ENCODE measurements at regions of chr7 and their contacts with region 1.

Region 1: GRCh38 chr7:107150375-107151073 is 18.3 kb upstream of the HBP1 start:
- DNase-seq: peak; percentile 34
- ATAC-seq: peak; percentile 57
- H3K4me3 Mint-ChIP-seq: no peak overlapping the region
- H3K27ac Mint-ChIP-seq: no peak overlapping the region
- H3K4me1 Mint-ChIP-seq: peaks cover 7% of the 10 kb centered on the region
- H3K27me3 Mint-ChIP-seq: no peaks in the 10 kb centered on the region
- CTCF ChIP-seq: no peak

Region 2: DNA sequence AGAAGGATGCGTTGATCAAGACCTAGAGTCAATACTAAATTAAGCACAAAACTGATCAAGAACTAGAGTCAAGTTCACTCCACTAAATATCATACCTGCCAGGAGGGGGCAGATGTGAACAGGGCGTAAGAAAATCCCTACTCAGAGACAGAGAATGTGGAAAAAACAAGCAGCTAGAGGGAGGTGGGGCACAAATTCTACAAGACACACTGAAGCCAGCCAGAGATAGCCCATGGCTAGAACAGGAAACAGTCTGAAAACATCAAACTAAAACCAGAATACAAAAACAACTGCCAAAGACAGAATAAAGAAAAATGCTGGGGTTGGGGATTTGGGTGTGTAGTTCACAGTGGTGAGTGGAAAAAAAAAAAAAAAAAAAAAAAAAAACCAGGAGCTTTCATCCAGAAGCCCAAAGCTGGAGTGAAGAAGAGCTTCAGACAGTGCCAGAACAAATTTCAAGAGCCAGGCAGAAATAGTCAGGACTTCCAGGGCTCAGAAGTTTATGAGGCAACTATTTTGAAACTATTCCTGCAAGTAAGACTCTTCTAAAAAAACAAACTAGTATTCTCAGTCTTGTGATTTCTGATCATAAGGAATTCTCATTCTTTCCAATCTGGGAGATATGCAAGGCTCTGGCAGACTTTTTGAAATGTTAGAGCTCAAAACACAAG is 607.8 kb before region 1 on chr7:
- CTCF ChIA-PET with region 1: interaction called, 7 read pairs
- POLR2A ChIA-PET with region 1: no interaction called
- intact Hi-C with region 1: loop called (anchors 2 kb)
- DNase-seq: no peak
- ATAC-seq: peak; percentile 90
- H3K4me3 Mint-ChIP-seq: no peak overlapping the region
- H3K27ac Mint-ChIP-seq: no peak overlapping the region
- H3K4me1 Mint-ChIP-seq: peaks cover 4% of the 10 kb centered on the region
- H3K27me3 Mint-ChIP-seq: peaks cover 2% of the 10 kb centered on the region
- CTCF ChIP-seq: no peak

Region 3: DNA sequence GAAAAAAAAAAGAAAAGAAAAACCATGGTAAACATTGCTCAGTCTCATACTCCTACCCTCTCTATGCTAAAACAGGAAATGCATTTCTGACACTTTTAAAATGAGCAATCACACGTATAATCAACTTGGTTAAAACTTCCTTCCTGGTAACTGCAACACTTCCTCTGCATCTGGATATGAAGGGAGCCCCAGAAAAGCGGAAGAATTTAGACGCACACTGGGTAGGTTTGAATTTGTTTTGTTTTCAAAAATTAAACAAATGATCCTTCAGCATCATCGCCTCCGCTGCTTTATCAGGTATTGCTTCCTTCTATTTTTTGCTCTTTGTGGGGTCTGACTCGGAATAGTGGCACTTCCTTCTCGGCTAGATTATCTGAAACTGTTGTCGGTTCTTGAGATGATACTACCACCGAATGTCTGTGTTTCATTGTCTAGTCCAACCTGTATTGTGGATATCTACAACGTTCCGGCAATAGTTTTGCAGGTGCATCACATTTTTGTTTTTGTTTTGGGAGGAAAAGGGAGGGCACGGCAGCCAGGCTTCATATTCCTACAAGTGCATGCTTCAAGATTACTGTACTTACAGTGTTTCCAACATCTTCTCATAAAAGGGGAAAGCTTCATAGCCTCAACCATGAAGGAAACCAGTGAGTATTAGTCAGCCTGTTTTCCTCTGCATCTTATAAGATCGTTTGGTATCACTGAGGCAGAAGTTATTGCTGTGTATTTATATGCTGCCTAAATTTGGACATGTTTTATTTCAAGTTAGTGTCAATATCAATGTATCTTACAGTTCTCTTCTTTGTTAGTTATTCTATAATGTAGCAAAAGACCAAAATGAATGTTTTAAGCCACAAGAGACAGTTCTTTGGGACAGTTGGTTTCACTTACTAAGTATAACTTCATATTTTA is 285.1 kb before region 1 on chr7 and contains the start of gene PIK3CG:
- CTCF ChIA-PET with region 1: interaction called, 4 read pairs
- POLR2A ChIA-PET with region 1: interaction called, 17 read pairs
- intact Hi-C with region 1: loop called (anchors 5 kb)
- DNase-seq: no peak
- ATAC-seq: peak; percentile 83
- H3K4me3 Mint-ChIP-seq: peak within 1 kb of the TSS; percentile 91
- H3K27ac Mint-ChIP-seq: peak within 1 kb of the TSS; percentile 90
- H3K4me1 Mint-ChIP-seq: peaks cover 71% of the 10 kb centered on the region
- H3K27me3 Mint-ChIP-seq: no peaks in the 10 kb centered on the region
- CTCF ChIP-seq: no peak
- total RNA-seq, gene PIK3CG: 62.0 and 63.6 TPM in 2 replicates

Region 4: DNA sequence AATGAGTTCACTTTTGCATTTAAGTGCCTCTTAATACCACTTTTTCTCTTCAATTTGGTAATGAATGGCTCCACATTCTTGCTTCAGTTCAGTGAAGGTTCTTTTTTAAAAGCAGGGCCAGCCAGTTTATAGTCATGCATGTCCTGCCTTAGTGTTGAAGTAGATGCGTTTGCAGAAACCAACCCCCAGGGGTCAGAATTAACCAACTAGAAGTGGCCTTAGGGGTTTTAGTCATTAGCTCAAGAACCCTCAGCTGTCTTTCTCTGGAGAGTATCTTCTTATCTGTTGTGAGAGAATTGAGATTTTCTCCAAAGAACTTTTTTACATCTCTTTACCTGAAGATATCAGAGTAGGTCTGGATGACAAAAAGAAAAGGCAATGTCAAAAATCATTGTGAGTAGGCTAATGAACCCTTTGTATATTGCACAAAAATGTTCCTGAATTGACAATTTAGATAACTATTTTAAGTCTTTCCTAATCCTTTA is 203.2 kb before region 1 on chr7:
- CTCF ChIA-PET with region 1: interaction called, 53 read pairs
- POLR2A ChIA-PET with region 1: interaction called, 3 read pairs
- intact Hi-C with region 1: loop called (anchors 1 kb)
- DNase-seq: no peak
- ATAC-seq: peak; percentile 62
- H3K4me3 Mint-ChIP-seq: no peak overlapping the region
- H3K27ac Mint-ChIP-seq: no peak overlapping the region
- H3K4me1 Mint-ChIP-seq: no peaks in the 10 kb centered on the region
- H3K27me3 Mint-ChIP-seq: no peaks in the 10 kb centered on the region
- CTCF ChIP-seq: no peak

Region 5: GRCh38 chr7:106999023-106999422 is 151.5 kb before region 1 on chr7:
- CTCF ChIA-PET with region 1: no interaction called
- POLR2A ChIA-PET with region 1: no interaction called
- intact Hi-C with region 1: no loop called
- DNase-seq: no peak
- ATAC-seq: no peak
- H3K4me3 Mint-ChIP-seq: no peak overlapping the region
- H3K27ac Mint-ChIP-seq: no peak overlapping the region
- H3K4me1 Mint-ChIP-seq: no peaks in the 10 kb centered on the region
- H3K27me3 Mint-ChIP-seq: peaks cover 21% of the 10 kb centered on the region
- CTCF ChIP-seq: no peak

Region 6: GRCh38 chr7:107187774-107188173 is 37.2 kb after region 1 on chr7:
- CTCF ChIA-PET with region 1: no interaction called
- POLR2A ChIA-PET with region 1: no interaction called
- intact Hi-C with region 1: no loop called
- DNase-seq: no peak
- ATAC-seq: no peak
- H3K4me3 Mint-ChIP-seq: no peak overlapping the region
- H3K27ac Mint-ChIP-seq: no peak overlapping the region
- H3K4me1 Mint-ChIP-seq: no peaks in the 10 kb centered on the region
- H3K27me3 Mint-ChIP-seq: no peaks in the 10 kb centered on the region
- CTCF ChIP-seq: no peak

Region 7: GRCh38 chr7:107262857-107263256 is 112.3 kb after region 1 on chr7:
- CTCF ChIA-PET with region 1: no interaction called
- POLR2A ChIA-PET with region 1: no interaction called
- intact Hi-C with region 1: no loop called
- DNase-seq: no peak
- ATAC-seq: no peak
- H3K4me3 Mint-ChIP-seq: no peak overlapping the region
- H3K27ac Mint-ChIP-seq: no peak overlapping the region
- H3K4me1 Mint-ChIP-seq: no peaks in the 10 kb centered on the region
- H3K27me3 Mint-ChIP-seq: no peaks in the 10 kb centered on the region
- CTCF ChIP-seq: no peak

Region 8: GRCh38 chr7:107462740-107463444 is 312.4 kb after region 1 on chr7:
- CTCF ChIA-PET with region 1: interaction called, 5 read pairs
- POLR2A ChIA-PET with region 1: no interaction called
- intact Hi-C with region 1: loop called (anchors 5 kb)
- DNase-seq: no peak
- ATAC-seq: peak; percentile 75
- H3K4me3 Mint-ChIP-seq: no peak overlapping the region
- H3K27ac Mint-ChIP-seq: no peak overlapping the region
- H3K4me1 Mint-ChIP-seq: no peaks in the 10 kb centered on the region
- H3K27me3 Mint-ChIP-seq: no peaks in the 10 kb centered on the region
- CTCF ChIP-seq: no peak

Region 9: GRCh38 chr7:107725151-107725740 is 574.7 kb after region 1 on chr7:
- CTCF ChIA-PET with region 1: interaction called, 4 read pairs
- POLR2A ChIA-PET with region 1: no interaction called
- intact Hi-C with region 1: loop called (anchors 1 kb)
- DNase-seq: no peak
- ATAC-seq: no peak
- H3K4me3 Mint-ChIP-seq: no peak overlapping the region
- H3K27ac Mint-ChIP-seq: no peak overlapping the region
- H3K4me1 Mint-ChIP-seq: no peaks in the 10 kb centered on the region
- H3K27me3 Mint-ChIP-seq: peaks cover 16% of the 10 kb centered on the region
- CTCF ChIP-seq: peak; percentile 48

Measured in activated B cell treated with CpG ODN at 0.5 μM for 24 hours (primary cell).